SK-N-SH (cell line): ENCODE measurements at regions of chr6 and their contacts with region 1.

Region 1: DNA sequence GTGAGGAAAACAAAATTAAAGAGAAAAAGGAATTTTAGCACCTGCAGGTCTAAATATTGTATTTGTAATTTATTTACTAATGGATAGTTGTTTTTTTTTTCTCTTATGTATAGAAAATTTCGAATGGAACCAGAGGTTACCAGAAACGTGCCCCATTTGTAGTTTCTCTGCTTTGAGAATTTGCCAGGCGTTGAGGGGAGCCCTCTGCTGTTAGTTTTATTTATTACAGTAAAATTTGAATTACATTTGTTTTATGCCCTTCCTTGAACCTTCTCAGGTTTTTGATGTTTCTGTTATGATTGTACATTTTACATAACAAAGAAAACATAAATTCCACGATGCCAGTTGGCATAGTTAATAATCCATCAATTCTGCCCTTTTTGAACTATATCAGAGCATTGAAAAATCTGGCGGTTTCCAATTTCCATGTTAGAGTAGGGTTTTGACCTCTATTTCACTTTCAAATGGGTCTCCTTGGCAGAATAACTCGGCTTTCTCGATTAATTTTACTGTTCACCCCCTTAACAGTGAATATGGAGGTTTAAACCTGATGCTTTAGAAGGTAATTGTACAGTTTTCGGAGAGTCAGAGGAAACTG is 35.1 kb upstream of the RFPL4B start:
- DNase-seq: peak; percentile 54
- H3K4me3 ChIP-seq: peak overlapping the region in 1 of 2 experiments; percentile 10; a peak in 1 of 4 replicates
- H3K27ac ChIP-seq: peak overlapping the region in 1 of 2 experiments; percentile 3; a peak in 2 of 4 replicates
- H3K4me1 ChIP-seq: no peaks in the 10 kb centered on the region; a peak in 1 of 4 replicates
- H3K27me3 ChIP-seq: no peaks in the 10 kb centered on the region
- CTCF ChIP-seq: peak; percentile 82
- EP300 ChIP-seq: no peak
- RAD21 ChIP-seq: peak; percentile 91

Region 2: GRCh38 chr6:112196306-112196705 is 115.7 kb before region 1 on chr6:
- CTCF ChIA-PET with region 1: interaction called, 18 read pairs
- POLR2A ChIA-PET with region 1: interaction called, 4 read pairs
- DNase-seq: no peak
- H3K4me3 ChIP-seq: no peak overlapping the region
- H3K27ac ChIP-seq: peak overlapping the region in 1 of 2 experiments; percentile 99; a peak in 2 of 4 replicates
- H3K4me1 ChIP-seq: peaks cover 0 to 31% of the 10 kb centered on the region in 2 experiments; a peak in 2 of 4 replicates
- H3K27me3 ChIP-seq: no peaks in the 10 kb centered on the region
- CTCF ChIP-seq: no peak
- EP300 ChIP-seq: no peak
- RAD21 ChIP-seq: no peak

Region 3: GRCh38 chr6:112296122-112296521 is 15.9 kb before region 1 on chr6:
- CTCF ChIA-PET with region 1: interaction called, 28 read pairs
- POLR2A ChIA-PET with region 1: no interaction called
- DNase-seq: no peak
- H3K4me3 ChIP-seq: no peak overlapping the region
- H3K27ac ChIP-seq: peak overlapping the region in 1 of 2 experiments; percentile 99; a peak in 1 of 4 replicates
- H3K4me1 ChIP-seq: peaks cover 0 to 36% of the 10 kb centered on the region in 2 experiments; a peak in 3 of 4 replicates
- H3K27me3 ChIP-seq: no peaks in the 10 kb centered on the region
- CTCF ChIP-seq: peak; percentile 67
- EP300 ChIP-seq: no peak
- RAD21 ChIP-seq: peak; percentile 38; the same call in 1 of the 2 replicates

Region 4: GRCh38 chr6:112606656-112607435 is 294.8 kb after region 1 on chr6:
- CTCF ChIA-PET with region 1: no interaction called
- POLR2A ChIA-PET with region 1: no interaction called
- DNase-seq: no peak
- H3K4me3 ChIP-seq: no peak overlapping the region
- H3K27ac ChIP-seq: no peak overlapping the region
- H3K4me1 ChIP-seq: peaks cover 0 to 4% of the 10 kb centered on the region in 2 experiments; a peak in 2 of 4 replicates
- H3K27me3 ChIP-seq: no peaks in the 10 kb centered on the region
- CTCF ChIP-seq: no peak
- EP300 ChIP-seq: no peak
- RAD21 ChIP-seq: no peak